ENCODE measurements at regions of chr14 and their contacts with region 1.

Region 1: DNA sequence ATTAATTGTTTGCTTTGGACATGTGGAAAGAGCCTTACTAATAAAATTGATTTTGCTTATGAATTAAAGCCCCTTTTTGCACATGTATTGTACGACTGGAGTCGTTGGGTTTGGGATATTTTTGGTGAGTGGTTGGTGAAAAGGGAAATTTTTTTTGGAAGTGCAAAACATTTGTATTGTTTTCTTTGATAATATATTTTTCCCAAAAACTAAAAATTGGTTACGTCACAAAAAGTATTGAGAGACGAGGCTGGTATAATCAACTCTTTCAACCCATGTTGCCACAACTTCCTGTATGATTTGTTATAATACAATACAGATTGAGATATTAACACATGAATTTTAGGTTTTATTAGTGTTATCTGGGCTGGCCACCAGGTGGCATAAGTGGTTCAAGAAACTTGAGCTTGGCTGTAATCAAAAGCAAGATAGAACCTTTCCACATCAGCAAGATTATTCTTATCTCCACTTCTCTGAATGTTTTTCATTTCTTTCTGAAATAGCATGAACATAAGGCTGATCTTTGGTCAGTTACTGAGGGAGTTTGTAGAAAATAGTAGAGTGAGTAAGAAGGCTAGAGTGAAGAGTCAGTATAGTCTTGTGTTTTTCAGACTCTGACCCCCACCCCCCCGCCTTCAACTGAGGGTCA is 8.7 kb downstream of the NGDN start:
- DNase-seq: peak; percentile 24 to 90 (median 70)

Region 2: DNA sequence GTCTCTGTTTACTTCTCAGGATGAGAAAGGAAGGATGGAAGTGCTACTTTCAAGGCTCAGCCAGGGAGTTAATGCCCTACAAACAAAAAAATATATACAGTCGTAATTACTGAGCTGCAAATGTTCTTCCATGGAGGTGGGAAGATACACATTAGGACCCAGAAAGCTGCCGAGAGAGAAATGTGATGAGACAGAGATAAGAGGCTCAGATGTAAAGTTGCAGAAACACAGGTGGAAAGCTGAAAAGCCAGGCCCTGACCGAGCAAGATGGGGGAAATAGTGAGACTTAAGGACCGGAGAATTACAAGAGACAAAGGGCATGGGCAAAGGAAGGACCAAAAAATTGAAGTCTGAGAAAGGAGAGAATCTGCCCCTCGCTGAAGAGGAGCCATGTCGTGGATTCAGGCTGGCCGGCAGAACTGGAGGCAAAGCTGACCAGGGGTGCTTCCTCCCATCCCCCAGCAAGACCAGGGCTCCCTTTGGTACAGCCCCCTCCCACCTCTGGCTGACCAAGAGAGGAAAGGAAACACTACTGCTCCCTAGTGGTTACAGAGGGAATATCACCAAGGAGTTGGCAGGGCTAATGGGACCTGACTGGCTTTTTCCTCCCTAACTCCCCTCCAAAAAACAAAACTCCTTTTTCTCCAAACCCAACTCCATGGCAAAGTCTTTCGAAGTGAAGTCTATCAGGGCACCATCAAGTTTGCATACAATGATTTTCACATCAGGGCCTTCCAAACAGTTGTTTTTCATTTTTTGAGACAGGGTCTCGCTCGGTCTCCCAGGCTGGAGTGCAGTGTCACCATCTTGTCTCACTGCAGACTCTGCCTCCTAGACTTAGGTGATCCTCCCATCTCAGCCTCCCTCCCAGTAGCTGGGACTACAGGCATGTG is 61.3 kb after region 1 on chr14:
- intact Hi-C with region 1: no loop called
- DNase-seq: peak in 29 of 42 donors; percentile 23 to 86 (median 60)

Region 3: GRCh38 chr14:23562268-23563203 is 84.3 kb after region 1 on chr14:
- intact Hi-C with region 1: loop called (anchors 2 kb)
- DNase-seq: peak in 34 of 42 donors; percentile 53 to 86 (median 70)